RWPE1 (cell line): ENCODE measurements at regions of chr10 and their contacts with region 1.

Region 1: DNA sequence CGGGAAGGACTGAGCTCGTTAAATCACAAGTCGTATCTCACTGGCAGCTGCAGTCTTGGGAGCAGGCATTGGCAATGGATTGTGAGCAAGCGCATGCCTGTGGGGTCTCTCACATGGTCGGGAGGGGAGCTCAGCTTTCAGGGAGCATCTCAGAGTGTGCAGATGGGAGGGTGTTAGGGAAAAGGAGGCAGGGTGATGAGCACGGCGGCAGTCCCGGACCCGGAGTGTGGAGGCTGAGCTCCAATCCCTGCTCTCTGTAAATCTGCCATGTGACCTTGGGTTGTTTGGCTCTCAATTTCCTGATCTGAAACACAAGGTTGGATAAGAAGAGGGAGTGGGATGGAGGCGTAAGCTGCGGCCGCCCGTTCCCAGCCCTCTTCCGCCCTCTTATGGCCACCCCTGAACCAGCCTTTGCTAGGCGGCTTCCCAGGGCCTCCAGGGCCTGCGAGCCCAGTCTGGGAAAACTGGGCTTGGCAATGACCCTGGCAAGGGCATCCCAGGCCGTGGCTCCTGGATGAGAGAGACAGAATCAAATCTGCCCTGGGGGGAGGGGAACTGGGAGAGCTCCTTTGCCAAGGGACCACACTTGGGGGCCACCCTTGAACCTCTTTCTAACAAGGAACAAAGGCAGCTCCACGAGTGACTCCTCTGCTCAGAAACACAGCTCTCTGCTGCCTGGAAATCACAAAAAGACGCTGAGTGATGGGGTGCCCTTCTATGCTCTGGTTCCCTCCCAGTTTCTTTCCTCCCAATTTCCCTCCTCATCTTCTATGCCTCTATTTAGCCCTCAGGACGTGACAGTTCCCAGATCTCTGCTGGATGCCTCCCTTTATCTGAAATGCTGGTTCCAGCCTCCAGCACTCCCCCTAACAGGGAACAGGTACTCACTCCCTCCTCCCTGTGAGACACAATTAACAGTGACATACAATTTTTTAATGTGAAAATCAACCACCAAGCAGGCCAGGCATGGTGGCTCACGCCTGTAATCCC is 41.7 kb upstream of the LOXL4 start:
- DNase-seq: peak; percentile 86
- H3K27ac ChIP-seq: no peak overlapping the region
- CTCF ChIP-seq: peak; percentile 81

Region 2: GRCh38 chr10:98170249-98171117 is 139.2 kb before region 1 on chr10:
- CTCF ChIA-PET with region 1: interaction called, 10 read pairs
- POLR2A ChIA-PET with region 1: no interaction called
- DNase-seq: peak; percentile 58
- H3K27ac ChIP-seq: no peak overlapping the region
- CTCF ChIP-seq: peak; percentile 79

Region 3: GRCh38 chr10:98242823-98243222 is 66.8 kb before region 1 on chr10:
- CTCF ChIA-PET with region 1: interaction called, 10 read pairs
- POLR2A ChIA-PET with region 1: no interaction called
- DNase-seq: no peak
- H3K27ac ChIP-seq: no peak overlapping the region
- CTCF ChIP-seq: peak; percentile 44

Region 4: DNA sequence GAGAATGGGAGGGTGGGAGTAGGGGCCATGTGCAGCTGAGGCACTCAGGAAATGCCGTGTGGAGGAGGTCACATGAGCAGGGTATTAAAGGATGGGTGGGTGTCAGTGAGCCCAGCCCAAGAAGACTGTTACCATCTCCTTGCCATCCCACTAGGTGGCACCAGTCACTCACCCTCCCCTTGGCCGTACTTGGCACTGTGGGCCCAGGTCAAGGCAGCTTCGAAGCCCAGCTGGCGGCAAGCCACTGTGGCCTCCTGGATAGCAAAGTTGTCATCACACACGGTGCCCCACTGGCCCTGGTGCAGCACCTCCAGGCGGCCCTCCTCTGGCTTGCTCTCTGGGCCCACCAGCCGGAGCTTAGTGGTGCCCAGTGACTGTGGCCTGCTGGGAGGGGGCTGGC is 47.1 kb before region 1 on chr10:
- CTCF ChIA-PET with region 1: interaction called, 26 read pairs
- POLR2A ChIA-PET with region 1: no interaction called
- DNase-seq: peak; percentile 50
- H3K27ac ChIP-seq: no peak overlapping the region
- CTCF ChIP-seq: no peak; the same call in 1 of the 2 replicates